Psoas muscle (tissue), 8 donors: ENCODE measurements at regions of chr2 and their contacts with region 1.

Region 1: GRCh38 chr2:177799531-177799930 is 273.0 kb downstream of the PDE11A start:
- DNase-seq: no peak
- ATAC-seq: peak in 3 of 4 donors; percentile 58 to 84 (median 84)
- H3K4me3 ChIP-seq: no peak overlapping the region
- H3K27ac ChIP-seq: no peak overlapping the region
- H3K4me1 ChIP-seq: peaks cover 16% of the 10 kb centered on the region
- H3K27me3 ChIP-seq: no peaks in the 10 kb centered on the region
- CTCF ChIP-seq: peak; percentile 53

Region 2: GRCh38 chr2:177717831-177718618 is 81.5 kb before region 1 on chr2:
- intact Hi-C with region 1: no loop called
- DNase-seq: no peak
- ATAC-seq: no peak
- H3K4me3 ChIP-seq: no peak overlapping the region
- H3K27ac ChIP-seq: no peak overlapping the region
- H3K4me1 ChIP-seq: no peaks in the 10 kb centered on the region
- H3K27me3 ChIP-seq: no peaks in the 10 kb centered on the region
- CTCF ChIP-seq: peak; percentile 13

Region 3: DNA sequence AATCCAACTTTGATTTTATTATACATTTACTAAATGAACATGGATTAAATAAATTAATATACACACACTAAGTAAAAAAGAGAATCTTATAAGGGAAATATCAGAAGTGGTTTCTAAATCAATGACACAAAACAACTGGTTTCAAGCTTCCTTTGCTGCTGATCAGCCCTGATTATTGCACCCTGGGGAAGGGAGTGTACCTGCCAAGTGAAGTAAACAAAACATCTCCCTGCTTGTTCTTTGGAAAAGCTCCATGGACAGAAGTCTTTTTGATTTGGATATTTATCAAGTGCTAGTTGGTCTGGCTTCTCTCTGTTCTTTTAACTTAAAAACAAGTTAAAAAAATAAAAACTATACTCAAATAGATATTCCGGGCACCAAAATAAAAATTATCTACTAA is 83.0 kb after region 1 on chr2:
- intact Hi-C with region 1: loop called in 1 of 2 experiments (anchors 5 kb)
- DNase-seq: no peak
- ATAC-seq: peak in 3 of 4 donors; percentile 31 to 79 (median 62)
- H3K4me3 ChIP-seq: no peak overlapping the region
- H3K27ac ChIP-seq: peak overlapping the region; percentile 65
- H3K4me1 ChIP-seq: peaks cover 41% of the 10 kb centered on the region
- H3K27me3 ChIP-seq: no peaks in the 10 kb centered on the region
- CTCF ChIP-seq: no peak

Region 4: DNA sequence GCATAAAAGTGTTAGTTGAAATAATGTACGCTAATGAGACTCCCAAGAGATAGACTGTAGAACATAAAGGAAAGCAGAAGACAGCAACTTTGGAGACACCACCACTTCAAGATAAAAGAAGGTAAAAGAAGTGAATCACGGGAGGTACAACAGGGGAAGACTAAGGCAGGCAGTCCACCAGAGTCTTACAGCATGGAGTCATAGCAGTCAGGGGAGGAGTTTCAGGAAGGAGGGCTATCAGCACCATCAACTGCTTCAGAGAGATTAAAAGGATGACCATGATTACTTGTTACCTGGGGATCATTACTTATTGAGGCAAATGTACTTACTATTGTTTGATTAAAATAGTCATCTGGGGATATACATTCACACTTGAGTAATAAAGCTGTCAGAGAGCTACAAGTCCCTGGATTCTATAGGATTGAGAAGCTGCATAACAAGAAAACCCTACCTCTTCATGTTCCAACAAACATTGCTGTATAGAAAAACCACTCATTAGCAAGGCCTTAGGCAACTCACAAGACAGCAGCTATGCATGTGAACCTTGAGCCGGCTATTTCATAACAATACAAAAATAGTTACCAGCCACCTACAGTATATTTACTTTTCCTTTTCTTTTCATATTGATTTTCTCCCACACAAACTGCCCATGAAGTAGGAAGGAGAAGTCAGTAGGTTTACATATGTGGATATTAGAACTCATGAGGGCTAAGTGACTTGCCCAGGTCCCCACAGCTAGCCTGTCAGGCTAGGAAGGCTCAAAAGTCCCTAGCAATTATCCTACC is 171.3 kb after region 1 on chr2:
- intact Hi-C with region 1: no loop called
- DNase-seq: no peak
- ATAC-seq: no peak
- H3K4me3 ChIP-seq: no peak overlapping the region
- H3K27ac ChIP-seq: no peak overlapping the region
- H3K4me1 ChIP-seq: no peaks in the 10 kb centered on the region
- H3K27me3 ChIP-seq: no peaks in the 10 kb centered on the region
- CTCF ChIP-seq: no peak